ENCODE measurements at regions of chr2 and their contacts with region 1.

Region 1: DNA sequence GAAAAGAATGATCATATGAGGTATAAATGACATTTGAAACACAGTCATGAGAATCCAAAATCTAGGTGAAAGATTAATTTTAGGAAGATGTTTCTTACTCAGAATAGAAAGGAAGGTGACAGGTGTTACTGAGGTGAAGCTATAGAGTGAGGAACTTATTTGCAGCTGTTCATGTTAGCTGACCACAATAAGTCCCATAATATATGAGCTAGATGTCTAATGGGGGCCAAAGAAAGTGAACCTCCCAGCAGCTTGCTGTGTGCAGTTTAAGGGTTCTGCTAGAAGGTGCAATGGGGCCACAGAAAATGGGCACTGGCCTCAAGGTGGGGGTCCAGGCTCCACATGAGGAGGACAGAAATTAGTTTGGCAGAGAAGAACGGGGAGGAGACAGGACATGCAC is 1374.9 kb upstream of the CRIM1 start:
- DNase-seq: no peak
- ATAC-seq: no peak

Region 2: GRCh38 chr2:33219850-33220275 is 1760.8 kb before region 1 on chr2:
- intact Hi-C with region 1: no loop called
- DNase-seq: no peak
- ATAC-seq: no peak

Region 3: DNA sequence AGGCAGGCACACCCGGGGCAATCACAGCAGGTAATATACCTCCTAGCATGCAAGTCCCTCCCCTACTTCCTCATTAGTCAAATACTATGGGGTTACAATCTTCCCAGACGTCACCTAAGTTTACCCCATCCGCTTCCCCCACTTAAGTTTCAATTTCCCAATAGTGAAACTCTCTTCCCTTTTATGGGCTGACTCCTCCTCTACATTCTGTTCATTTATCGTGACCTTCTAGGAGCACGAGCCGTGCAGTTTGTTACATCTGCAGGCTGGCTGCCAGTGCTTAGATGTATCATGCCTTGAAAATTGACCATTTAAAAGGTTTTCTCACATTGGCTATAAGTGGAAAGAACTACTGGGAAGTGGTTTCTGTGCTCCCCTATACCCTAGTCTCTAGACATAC is 17.1 kb after region 1 on chr2:
- intact Hi-C with region 1: loop called (anchors 1 kb)
- DNase-seq: no peak
- ATAC-seq: peak; percentile 44